HCT116 (cell line): ENCODE measurements at regions of chr22 and their contacts with region 1.

Region 1: GRCh38 chr22:37807410-37808293 is at the start of gene GCAT:
- DNase-seq: peak; percentile 95
- ATAC-seq: peak; percentile 81
- H3K4me3 ChIP-seq: peak within 1 kb of the TSS; percentile 80 to 95
- H3K27ac ChIP-seq: peak within 1 kb of the TSS; percentile 87
- H3K4me1 ChIP-seq: peaks cover 15 to 60% of the 10 kb centered on the region in 2 experiments; a peak in 3 of 4 replicates
- H3K27me3 ChIP-seq: no peaks in the 10 kb centered on the region
- CTCF ChIP-seq: no peak
- POLR2A ChIP-seq: peak; percentile 78
- RAD21 ChIP-seq: no peak
- total RNA-seq, gene GCAT: 88.7 TPM

Region 2: DNA sequence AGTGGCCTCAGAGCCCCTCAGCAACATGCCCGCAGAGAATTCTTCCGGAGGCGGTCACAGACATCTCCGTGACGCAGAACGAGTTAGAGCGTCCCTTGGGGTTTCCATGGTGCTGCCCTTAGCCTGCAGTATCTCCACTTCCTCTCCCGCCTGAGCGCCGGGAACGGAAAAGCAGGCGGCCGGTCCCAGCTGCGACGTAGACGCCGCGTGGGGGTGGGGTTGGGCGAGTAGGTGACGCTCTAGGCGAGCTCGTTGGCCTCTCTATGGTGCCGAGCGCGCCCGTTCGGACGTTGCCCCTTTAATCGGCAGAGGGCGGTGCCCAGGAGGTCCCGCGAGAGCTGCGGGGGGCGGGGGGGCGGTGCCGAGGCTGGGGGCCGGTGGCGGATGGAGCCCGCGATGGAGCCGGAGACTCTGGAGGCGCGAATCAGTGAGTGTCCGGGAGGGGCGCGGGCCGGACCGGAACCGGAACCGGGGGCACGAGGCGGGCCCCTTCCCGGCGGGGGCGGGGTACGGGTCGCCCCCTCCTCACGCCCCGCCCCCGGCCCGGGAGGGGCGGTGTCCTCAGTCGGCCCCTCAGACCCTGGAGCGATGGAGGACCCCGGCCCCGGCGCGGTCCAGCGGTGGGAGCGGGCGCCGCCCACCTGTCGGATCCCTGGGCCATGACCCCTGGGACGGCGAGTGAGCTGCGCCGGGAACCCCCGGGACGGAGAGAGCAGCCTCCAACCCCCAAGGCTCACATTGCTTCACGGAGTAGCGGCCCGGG is 199.0 kb before region 1 on chr22 and contains the start of gene GGA1:
- CTCF ChIA-PET with region 1: no interaction called
- POLR2A ChIA-PET with region 1: interaction called, 21 read pairs
- RAD21 ChIA-PET with region 1: no interaction called
- intact Hi-C with region 1: loop called (anchors 5 kb)
- DNase-seq: peak; percentile 96
- ATAC-seq: peak; percentile 78
- H3K4me3 ChIP-seq: peak within 1 kb of the TSS; percentile 82 to 93
- H3K27ac ChIP-seq: peak within 1 kb of the TSS; percentile 100
- H3K4me1 ChIP-seq: peaks cover 38 to 55% of the 10 kb centered on the region in 2 experiments
- H3K27me3 ChIP-seq: no peaks in the 10 kb centered on the region
- CTCF ChIP-seq: no peak
- POLR2A ChIP-seq: no peak
- RAD21 ChIP-seq: no peak
- total RNA-seq, gene GGA1: 89.8 TPM

Region 3: DNA sequence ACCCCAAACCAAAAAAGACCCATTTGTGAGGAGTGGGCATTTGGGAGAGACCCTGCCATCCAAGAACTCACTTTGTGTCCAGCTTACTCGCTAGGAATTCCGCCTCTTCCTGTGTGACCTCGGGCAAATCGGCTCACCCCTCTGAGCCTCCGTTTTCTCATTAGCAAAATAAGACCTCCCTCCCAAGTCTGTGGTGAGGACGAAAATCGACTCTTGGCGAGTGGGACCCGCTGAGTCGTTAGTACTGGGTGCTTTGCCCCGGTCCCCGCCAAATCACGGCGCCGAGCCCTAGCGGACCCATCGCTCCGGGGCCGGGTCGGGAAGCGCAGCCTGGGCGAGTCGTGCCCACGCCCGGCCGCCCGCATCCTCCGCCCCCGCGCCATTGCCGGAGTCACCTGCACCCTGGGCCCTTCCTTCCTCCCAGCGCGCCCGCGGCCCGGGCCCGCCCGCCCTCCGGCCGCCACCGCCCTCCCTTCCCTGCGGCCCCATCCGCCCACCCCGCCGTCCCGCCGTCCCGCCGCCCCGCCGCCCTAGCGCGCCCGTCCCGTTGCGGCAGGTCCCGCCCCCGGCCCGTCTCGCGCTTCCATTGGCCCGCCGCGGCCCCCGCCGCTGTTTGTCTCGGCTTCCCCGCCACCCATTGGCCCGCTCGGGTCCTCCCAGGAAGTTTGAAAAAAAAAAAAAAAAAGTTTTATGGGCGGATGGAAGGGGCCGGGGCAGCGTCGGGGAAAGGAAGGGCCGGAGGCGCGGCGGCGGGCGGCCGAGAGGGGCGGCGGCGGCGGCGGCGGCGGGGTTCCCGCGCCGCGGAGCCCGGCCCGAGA is 61.9 kb before region 1 on chr22:
- CTCF ChIA-PET with region 1: no interaction called
- POLR2A ChIA-PET with region 1: interaction called, 20 read pairs
- RAD21 ChIA-PET with region 1: no interaction called
- intact Hi-C with region 1: no loop called
- DNase-seq: no peak
- ATAC-seq: peak; percentile 47
- H3K4me3 ChIP-seq: peak overlapping the region; percentile 94 to 98
- H3K27ac ChIP-seq: peak overlapping the region; percentile 98
- H3K4me1 ChIP-seq: peaks cover 71 to 85% of the 10 kb centered on the region in 2 experiments
- H3K27me3 ChIP-seq: no peaks in the 10 kb centered on the region
- CTCF ChIP-seq: no peak
- POLR2A ChIP-seq: no peak
- RAD21 ChIP-seq: no peak

Region 4: DNA sequence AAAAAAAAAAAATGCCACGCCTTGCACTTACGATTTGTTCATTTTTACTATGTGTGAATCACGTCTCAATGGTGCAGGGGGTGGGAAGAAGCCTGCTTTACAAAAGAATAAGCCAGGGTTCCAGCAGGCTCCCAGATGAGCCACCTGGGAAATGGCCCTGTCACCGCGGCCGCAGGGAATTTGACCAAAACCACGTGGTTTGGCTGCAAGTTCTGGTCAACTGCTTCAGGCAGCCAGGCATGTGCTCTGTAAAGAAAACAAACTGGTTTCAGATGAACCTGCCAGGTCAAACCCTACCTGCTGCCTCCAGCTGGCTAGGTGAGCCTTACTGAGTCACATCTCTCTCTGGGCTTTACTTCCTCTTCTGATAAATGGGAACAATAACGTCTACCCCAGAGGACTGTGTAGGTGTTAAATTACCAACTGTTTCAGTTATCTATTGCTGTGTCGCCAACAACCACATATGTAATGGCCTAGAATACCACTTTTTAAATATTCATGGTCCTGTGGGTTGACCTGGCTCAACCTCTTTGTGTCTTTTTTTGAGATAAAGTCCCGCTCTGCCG is 30.4 kb before region 1 on chr22:
- CTCF ChIA-PET with region 1: interaction called, 9 read pairs
- POLR2A ChIA-PET with region 1: interaction called, 41 read pairs
- RAD21 ChIA-PET with region 1: interaction called in 1 of 2 experiments, 4 read pairs
- intact Hi-C with region 1: no loop called
- DNase-seq: peak; percentile 84
- ATAC-seq: peak; percentile 56
- H3K4me3 ChIP-seq: no peak overlapping the region
- H3K27ac ChIP-seq: peak overlapping the region; percentile 30
- H3K4me1 ChIP-seq: peaks cover 42 to 84% of the 10 kb centered on the region in 2 experiments
- H3K27me3 ChIP-seq: no peaks in the 10 kb centered on the region
- CTCF ChIP-seq: no peak
- POLR2A ChIP-seq: peak; percentile 39
- RAD21 ChIP-seq: no peak

Region 5: GRCh38 chr22:37817705-37818408 is 10.2 kb after region 1 on chr22:
- CTCF ChIA-PET with region 1: interaction called, 17 read pairs
- POLR2A ChIA-PET with region 1: interaction called, 19 read pairs
- RAD21 ChIA-PET with region 1: no interaction called
- intact Hi-C with region 1: no loop called
- DNase-seq: no peak
- ATAC-seq: peak; percentile 93
- H3K4me3 ChIP-seq: no peak overlapping the region
- H3K27ac ChIP-seq: peak overlapping the region; percentile 27; the same call in 1 of the 2 replicates
- H3K4me1 ChIP-seq: peaks cover 4 to 9% of the 10 kb centered on the region in 2 experiments; a peak in 3 of 4 replicates
- H3K27me3 ChIP-seq: no peaks in the 10 kb centered on the region
- CTCF ChIP-seq: peak; percentile 84 to 93 (median 87)
- POLR2A ChIP-seq: no peak
- RAD21 ChIP-seq: peak; percentile 93